AG04450 (cell line): ENCODE measurements at regions of chr13 and their contacts with region 1.

Region 1: GRCh38 chr13:108895220-108895704 is 265.9 kb downstream of the MYO16 start:
- DNase-seq: no peak
- H3K4me3 ChIP-seq: no peak overlapping the region
- H3K27ac ChIP-seq: no peak overlapping the region
- H3K27me3 ChIP-seq: no peaks in the 10 kb centered on the region
- CTCF ChIP-seq: peak; percentile 47

Region 2: DNA sequence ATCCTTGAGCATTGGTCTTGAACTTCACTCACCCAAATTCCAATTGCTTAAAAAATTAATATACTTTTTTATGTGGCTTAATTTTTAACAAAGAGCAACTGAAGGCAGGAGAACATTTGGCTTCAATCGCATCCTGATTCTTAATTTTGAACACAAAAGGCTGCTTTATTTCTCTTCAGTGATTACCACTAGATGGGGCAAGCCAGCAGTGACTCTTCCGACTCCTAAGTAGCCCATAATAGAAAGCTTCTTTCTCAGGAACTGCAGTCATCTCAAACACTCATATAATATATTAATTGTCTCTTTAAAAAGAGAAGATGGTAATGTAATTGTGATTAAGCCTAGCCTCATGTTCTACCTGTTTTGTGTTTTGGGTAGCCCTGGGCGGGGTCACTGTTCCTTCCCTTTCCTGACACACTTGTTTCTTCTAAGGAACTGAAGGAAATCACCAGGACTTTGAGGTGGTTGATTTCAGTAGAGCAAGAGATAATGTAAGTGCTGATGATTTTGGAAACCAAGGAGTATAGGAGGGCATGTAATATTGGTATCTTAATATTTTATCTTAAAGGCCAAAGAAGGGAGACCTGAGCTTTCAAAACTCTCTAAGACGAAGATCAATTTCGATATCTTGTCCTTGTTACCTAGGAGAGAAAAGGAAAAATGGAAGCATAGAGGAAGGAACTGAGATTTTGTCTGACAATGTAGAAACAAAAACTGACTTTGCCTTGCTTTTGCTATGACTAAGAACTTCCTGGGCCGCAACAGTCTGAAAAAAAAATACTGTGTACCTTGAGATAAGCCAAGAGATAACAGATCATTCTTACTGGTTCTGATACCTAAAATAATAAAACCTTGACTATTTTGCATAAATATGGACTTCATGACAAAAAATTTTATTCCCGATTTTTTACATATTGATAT is 552.6 kb before region 1 on chr13:
- CTCF ChIA-PET with region 1: interaction called, 28 read pairs
- POLR2A ChIA-PET with region 1: no interaction called
- DNase-seq: peak; percentile 6
- H3K4me3 ChIP-seq: no peak overlapping the region
- H3K27ac ChIP-seq: no peak overlapping the region
- H3K27me3 ChIP-seq: peaks cover 3% of the 10 kb centered on the region
- CTCF ChIP-seq: peak; percentile 69

Region 3: GRCh38 chr13:108615241-108615640 is 280.0 kb before region 1 on chr13:
- CTCF ChIA-PET with region 1: interaction called, 130 read pairs
- POLR2A ChIA-PET with region 1: no interaction called
- DNase-seq: no peak
- H3K4me3 ChIP-seq: no peak overlapping the region
- H3K27ac ChIP-seq: no peak overlapping the region
- H3K27me3 ChIP-seq: no peaks in the 10 kb centered on the region
- CTCF ChIP-seq: no peak

Region 4: DNA sequence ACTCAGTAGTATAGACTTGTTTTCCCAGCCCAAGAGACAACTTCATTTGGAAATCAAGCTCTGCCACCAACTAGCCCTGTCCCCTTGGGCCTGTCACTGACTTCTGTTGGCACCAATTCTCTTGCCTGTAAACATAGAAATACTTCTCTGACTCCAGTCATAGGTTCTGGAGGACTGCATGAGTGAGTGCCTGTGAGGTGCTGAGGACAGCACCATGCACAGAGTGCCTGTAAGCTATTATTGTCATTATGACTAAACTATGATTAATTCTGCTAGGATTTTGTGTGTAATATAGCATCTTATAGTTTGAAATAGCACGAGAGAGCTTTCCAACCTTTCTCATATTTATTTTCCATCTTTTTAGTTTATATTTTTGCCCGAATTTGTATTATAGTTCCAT is 18.0 kb before region 1 on chr13:
- CTCF ChIA-PET with region 1: interaction called, 10 read pairs
- POLR2A ChIA-PET with region 1: no interaction called
- DNase-seq: no peak
- H3K4me3 ChIP-seq: no peak overlapping the region
- H3K27ac ChIP-seq: no peak overlapping the region
- H3K27me3 ChIP-seq: peaks cover 2% of the 10 kb centered on the region
- CTCF ChIP-seq: no peak

Region 5: GRCh38 chr13:108996430-108996829 is 101.2 kb after region 1 on chr13:
- CTCF ChIA-PET with region 1: no interaction called
- POLR2A ChIA-PET with region 1: no interaction called
- DNase-seq: no peak
- H3K4me3 ChIP-seq: no peak overlapping the region
- H3K27ac ChIP-seq: no peak overlapping the region
- H3K27me3 ChIP-seq: no peaks in the 10 kb centered on the region
- CTCF ChIP-seq: no peak